Panc1 (cell line): ENCODE measurements at regions of chr21 and their contacts with region 1.

Region 1: GRCh38 chr21:38805328-38806152 is at the start of gene ETS2:
- DNase-seq: no peak
- ATAC-seq: peak; percentile 76
- H3K4me3 ChIP-seq: peak within 1 kb of the TSS; percentile 76 to 84
- H3K27ac ChIP-seq: peak within 1 kb of the TSS; percentile 99
- H3K4me1 ChIP-seq: peaks cover 42% of the 10 kb centered on the region
- H3K27me3 ChIP-seq: no peaks in the 10 kb centered on the region
- CTCF ChIP-seq: peak; percentile 46
- total RNA-seq, gene ETS2: 132 TPM

Region 2: DNA sequence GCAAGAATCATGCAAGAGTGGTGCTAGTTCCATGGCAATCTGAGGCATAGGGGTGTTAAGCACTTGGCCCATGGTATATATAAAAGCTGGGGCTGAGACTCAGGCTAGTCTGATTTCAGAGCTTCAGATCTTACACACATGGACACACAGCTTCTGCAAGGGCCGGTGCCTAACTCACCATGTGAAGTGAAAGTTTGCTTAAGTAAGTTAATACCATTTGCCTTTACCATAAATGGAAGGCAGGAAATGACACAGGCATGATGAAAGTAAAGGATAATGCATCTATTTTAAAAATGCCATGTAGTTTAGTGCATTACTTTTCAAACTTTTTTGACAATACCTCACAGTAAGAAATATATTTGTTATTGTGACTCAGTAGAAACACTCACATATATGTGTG is 1011.9 kb before region 1 on chr21:
- CTCF ChIA-PET with region 1: no interaction called
- POLR2A ChIA-PET with region 1: interaction called, 14 read pairs
- in situ Hi-C with region 1: no loop called
- intact Hi-C with region 1: no loop called
- DNase-seq: no peak
- ATAC-seq: no peak
- H3K4me3 ChIP-seq: no peak overlapping the region
- H3K27ac ChIP-seq: no peak overlapping the region
- H3K4me1 ChIP-seq: no peaks in the 10 kb centered on the region
- H3K27me3 ChIP-seq: no peaks in the 10 kb centered on the region
- CTCF ChIP-seq: no peak

Region 3: DNA sequence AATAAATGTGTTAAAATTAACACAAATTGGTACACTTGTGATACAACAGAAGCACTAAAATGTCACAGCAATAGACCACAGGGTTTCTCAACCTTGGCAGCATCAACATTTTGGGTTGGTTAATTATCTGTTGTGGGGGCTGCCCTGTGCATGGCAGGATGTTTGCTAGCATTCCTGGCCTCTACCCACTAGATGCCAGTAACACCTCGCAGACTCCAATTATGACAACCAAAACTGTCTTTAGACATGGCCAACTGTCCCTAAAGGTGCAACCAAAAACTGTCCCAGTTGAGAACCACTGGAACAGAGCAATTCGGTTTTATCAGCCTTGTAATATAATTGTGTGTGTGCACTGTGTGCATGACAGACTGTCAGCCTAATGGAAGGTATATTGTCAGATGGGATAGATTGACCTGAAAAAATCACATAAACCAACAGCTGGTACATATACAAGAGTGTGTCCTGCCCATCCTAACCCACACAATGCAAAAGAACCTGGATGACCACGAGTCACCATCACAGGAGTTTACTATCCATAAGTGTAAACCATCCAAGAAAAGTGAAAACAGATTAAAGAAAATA is 293.8 kb before region 1 on chr21:
- CTCF ChIA-PET with region 1: no interaction called
- POLR2A ChIA-PET with region 1: no interaction called
- in situ Hi-C with region 1: no loop called
- intact Hi-C with region 1: loop called (anchors 10 kb)
- DNase-seq: no peak
- ATAC-seq: peak; percentile 80; the same call in 1 of the 2 replicates
- H3K4me3 ChIP-seq: no peak overlapping the region
- H3K27ac ChIP-seq: no peak overlapping the region
- H3K4me1 ChIP-seq: no peaks in the 10 kb centered on the region
- H3K27me3 ChIP-seq: no peaks in the 10 kb centered on the region
- CTCF ChIP-seq: peak; percentile 68

Region 4: GRCh38 chr21:38712071-38712470 is 93.5 kb before region 1 on chr21:
- CTCF ChIA-PET with region 1: interaction called, 13 read pairs
- POLR2A ChIA-PET with region 1: no interaction called
- in situ Hi-C with region 1: no loop called
- intact Hi-C with region 1: no loop called
- DNase-seq: peak; percentile 30
- ATAC-seq: peak; percentile 94
- H3K4me3 ChIP-seq: no peak overlapping the region
- H3K27ac ChIP-seq: no peak overlapping the region
- H3K4me1 ChIP-seq: no peaks in the 10 kb centered on the region
- H3K27me3 ChIP-seq: no peaks in the 10 kb centered on the region
- CTCF ChIP-seq: peak; percentile 81

Region 5: GRCh38 chr21:38733973-38734546 is 71.5 kb before region 1 on chr21:
- CTCF ChIA-PET with region 1: interaction called, 7 read pairs
- POLR2A ChIA-PET with region 1: no interaction called
- in situ Hi-C with region 1: no loop called
- intact Hi-C with region 1: loop called (anchors 2 kb)
- DNase-seq: peak; percentile 85
- ATAC-seq: peak; percentile 96
- H3K4me3 ChIP-seq: peak overlapping the region; percentile 26 to 65
- H3K27ac ChIP-seq: peak overlapping the region; percentile 95
- H3K4me1 ChIP-seq: peaks cover 9% of the 10 kb centered on the region
- H3K27me3 ChIP-seq: no peaks in the 10 kb centered on the region
- CTCF ChIP-seq: peak; percentile 89

Region 6: DNA sequence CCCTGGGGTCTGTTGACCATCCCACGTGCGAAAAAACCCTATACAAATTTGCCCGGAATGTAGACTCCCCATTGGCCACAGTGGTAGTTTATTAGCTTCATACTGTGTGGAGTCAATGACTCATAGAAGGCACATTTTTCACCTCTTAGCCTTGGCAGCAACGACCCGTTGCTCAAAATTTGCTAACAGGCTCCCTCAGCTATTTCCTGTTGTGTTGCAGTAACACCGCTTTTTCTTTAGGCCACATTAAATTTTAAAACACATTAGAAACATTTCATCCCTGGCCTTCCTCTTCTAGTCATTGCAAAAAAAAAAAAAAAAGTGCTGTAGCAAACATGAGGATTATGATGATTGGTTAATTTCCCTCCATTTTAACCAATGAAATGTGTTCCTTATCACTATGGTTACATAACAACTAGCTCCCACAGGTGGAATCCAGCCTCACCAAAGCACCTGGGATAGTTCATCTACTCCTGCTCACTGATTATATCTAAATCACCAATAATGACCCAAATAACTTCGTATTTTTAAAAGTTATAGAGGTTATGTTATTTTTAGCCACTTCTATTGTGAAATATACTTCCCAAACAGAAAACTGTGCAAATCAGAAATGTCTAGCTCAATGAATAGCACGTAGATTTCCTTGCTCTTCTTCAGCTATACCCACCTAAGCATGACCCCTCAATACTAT is 49.7 kb before region 1 on chr21:
- CTCF ChIA-PET with region 1: no interaction called
- POLR2A ChIA-PET with region 1: interaction called, 11 read pairs
- in situ Hi-C with region 1: no loop called
- intact Hi-C with region 1: no loop called
- DNase-seq: no peak
- ATAC-seq: peak; percentile 84
- H3K4me3 ChIP-seq: no peak overlapping the region
- H3K27ac ChIP-seq: peak overlapping the region; percentile 51
- H3K4me1 ChIP-seq: peaks cover 16% of the 10 kb centered on the region
- H3K27me3 ChIP-seq: no peaks in the 10 kb centered on the region
- CTCF ChIP-seq: no peak

Region 7: DNA sequence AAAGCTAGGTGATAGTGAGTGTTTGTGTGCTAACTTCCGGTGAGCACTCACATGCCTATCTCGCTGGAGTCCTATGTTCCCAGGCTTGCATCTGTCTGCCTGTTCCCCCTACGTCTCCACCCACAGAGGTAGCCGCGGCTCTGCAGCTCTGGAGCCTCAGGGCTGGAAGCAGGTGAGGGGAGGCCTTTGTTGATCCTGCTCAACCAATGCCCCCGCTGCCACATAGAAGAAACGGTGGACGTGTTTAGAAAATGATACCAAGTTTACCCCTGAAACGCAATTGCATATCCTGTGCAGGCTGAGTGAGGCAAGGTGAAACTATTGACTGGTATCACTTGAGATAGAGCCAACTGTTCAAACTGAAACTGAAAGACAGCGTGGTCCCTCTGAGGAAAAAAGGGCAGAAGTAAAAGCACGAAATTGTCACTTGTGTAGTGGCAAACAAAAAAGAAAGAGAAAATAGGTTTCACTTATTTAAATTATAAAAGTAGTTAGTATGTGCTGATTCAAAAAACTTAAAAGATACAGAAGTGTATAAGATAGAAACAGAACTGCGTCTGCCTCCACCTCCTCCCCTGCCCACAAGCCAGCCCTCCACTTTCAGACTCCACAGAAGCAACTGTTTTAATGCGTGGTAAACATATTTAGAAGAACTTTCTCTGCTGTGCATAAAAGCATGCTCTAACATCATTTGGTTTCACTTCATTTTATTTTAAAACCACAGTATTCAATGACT is 38.4 kb before region 1 on chr21:
- CTCF ChIA-PET with region 1: no interaction called
- POLR2A ChIA-PET with region 1: interaction called, 4 read pairs
- in situ Hi-C with region 1: no loop called
- intact Hi-C with region 1: loop called (anchors 5 kb)
- DNase-seq: no peak
- ATAC-seq: peak; percentile 43; the same call in 1 of the 2 replicates
- H3K4me3 ChIP-seq: peak overlapping the region; percentile 31 to 51
- H3K27ac ChIP-seq: peak overlapping the region; percentile 98
- H3K4me1 ChIP-seq: peaks cover 32% of the 10 kb centered on the region
- H3K27me3 ChIP-seq: no peaks in the 10 kb centered on the region
- CTCF ChIP-seq: no peak